Activated CD4-positive, alpha-beta memory T cell treated with anti-CD3 and anti-CD28 coated beads, Interleukin-2, amount 10 ng/mL, durations not matched to agents 7 days and 5 days (primary cell): ENCODE measurements at regions of chr7 and their contacts with region 1.

Region 1: DNA sequence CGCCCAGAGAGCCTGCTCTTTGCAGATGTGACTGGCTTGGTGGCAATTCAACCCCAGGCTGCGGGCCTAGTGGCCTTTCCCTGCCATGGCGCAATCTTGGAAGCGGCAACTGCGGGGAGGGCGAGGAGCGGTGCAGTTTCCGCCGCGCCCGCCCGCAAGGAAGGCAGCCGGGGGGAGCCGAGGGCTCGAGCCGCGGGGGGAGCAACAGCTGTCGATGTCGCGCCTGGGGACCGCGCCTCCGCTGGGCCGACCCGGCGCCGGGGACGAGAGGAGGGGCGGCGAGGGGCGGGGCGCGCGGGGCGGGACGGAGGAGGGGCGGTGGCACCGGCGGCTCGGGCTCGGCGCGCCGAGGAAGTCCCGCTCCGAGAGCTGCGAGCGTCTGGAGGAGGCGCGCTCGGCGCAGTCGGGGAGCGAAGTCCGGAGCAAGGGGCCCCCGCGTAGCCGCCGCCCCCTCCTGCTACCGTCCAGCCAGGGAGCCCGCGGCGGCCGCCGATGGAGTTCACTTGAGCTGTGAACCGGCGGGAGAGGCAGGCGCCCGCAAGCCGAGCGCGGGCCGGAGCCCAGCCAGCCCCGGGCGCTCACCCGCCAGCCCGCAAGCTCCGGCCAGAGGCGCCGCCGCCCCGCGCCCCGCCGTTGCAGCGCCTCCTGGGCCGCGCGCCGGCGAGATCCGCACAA is 438.1 kb upstream of the GALNT17 start:
- DNase-seq: peak; percentile 48
- H3K4me3 Mint-ChIP-seq: peak overlapping the region; percentile 61
- H3K27ac Mint-ChIP-seq: no peak overlapping the region
- H3K4me1 Mint-ChIP-seq: peaks cover 22% of the 10 kb centered on the region
- H3K27me3 Mint-ChIP-seq: peaks cover 33% of the 10 kb centered on the region

Region 2: DNA sequence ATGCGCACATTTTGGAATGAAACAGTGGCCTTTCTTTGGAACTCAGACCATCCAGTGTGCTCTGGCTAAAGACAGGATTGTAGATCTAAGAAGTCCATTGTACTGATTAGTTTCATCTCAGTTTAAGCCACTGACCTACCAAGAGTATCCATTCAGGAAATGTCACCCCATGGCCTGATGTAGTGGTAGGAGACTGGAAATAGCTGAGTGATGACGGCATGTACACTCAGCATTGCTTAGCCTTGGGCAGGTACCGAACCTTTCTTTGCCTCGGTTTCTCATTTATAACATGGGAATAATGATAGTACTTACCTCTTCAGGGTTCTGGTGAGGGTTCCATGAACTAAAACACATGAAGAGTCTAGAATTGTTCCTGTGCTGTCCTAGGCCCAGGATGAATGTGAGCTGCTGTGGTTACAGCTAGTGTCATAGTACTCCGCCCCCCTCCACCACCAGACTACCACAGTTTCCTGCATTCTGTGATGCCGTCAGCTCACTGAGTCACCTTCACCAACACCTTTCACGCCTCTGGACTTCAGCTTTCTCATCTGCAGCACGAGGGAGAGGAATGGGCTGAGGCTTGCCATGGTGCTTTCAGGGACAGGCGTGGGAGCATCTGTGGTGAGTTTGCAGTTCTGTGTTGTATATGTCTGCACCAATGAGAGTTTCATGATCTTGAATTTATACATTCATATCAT is 45.9 kb before region 1 on chr7:
- CTCF ChIA-PET with region 1: interaction called, 11 read pairs
- POLR2A ChIA-PET with region 1: interaction called, 11 read pairs
- DNase-seq: peak; percentile 85
- H3K4me3 Mint-ChIP-seq: peak overlapping the region; percentile 32
- H3K27ac Mint-ChIP-seq: peak overlapping the region; percentile 64
- H3K4me1 Mint-ChIP-seq: peaks cover 21% of the 10 kb centered on the region
- H3K27me3 Mint-ChIP-seq: peaks cover 7% of the 10 kb centered on the region

Region 3: GRCh38 chr7:70668606-70669358 is 25.0 kb before region 1 on chr7:
- CTCF ChIA-PET with region 1: no interaction called
- POLR2A ChIA-PET with region 1: no interaction called
- DNase-seq: no peak
- H3K4me3 Mint-ChIP-seq: no peak overlapping the region
- H3K27ac Mint-ChIP-seq: no peak overlapping the region
- H3K4me1 Mint-ChIP-seq: peaks cover 9% of the 10 kb centered on the region
- H3K27me3 Mint-ChIP-seq: no peaks in the 10 kb centered on the region

Region 4: GRCh38 chr7:70681469-70682350 is 12.1 kb before region 1 on chr7:
- CTCF ChIA-PET with region 1: interaction called, 5 read pairs
- POLR2A ChIA-PET with region 1: interaction called, 19 read pairs
- DNase-seq: peak; percentile 34
- H3K4me3 Mint-ChIP-seq: peak overlapping the region; percentile 47
- H3K27ac Mint-ChIP-seq: peak overlapping the region; percentile 65
- H3K4me1 Mint-ChIP-seq: peaks cover 42% of the 10 kb centered on the region
- H3K27me3 Mint-ChIP-seq: no peaks in the 10 kb centered on the region